ENCODE measurements at regions of chr7 and their contacts with region 1.

Region 1: GRCh38 chr7:134329614-134330340 is 13.0 kb upstream of the SLC35B4 start:
- DNase-seq: no peak
- H3K4me3 ChIP-seq: no peak overlapping the region
- H3K27ac ChIP-seq: no peak overlapping the region
- H3K4me1 ChIP-seq: no peaks in the 10 kb centered on the region
- H3K27me3 ChIP-seq: peaks cover 5% of the 10 kb centered on the region
- CTCF ChIP-seq: no peak
- EP300 ChIP-seq: no peak
- POLR2A ChIP-seq: no peak

Region 2: DNA sequence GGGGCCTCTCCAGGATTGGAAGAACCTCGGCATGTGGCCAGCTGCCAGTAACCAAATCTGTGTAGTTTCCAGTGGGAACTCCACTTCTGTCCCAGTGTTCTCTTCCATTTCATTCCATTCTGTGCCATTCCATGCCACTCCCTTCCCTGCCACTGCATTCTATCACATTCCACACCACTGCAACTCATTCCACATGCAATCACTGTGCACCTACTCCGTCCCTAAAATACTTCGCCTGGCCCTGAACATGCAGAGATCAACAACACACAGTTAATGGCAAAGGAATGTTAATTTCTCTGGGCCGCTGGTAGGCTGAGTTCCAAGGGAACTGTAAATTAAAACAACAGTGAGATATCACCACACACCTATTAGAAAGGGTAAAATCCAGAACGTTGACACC is 64.3 kb after region 1 on chr7:
- in situ Hi-C with region 1: no loop called
- intact Hi-C with region 1: loop called (anchors 10 kb)
- DNase-seq: no peak
- H3K4me3 ChIP-seq: no peak overlapping the region
- H3K27ac ChIP-seq: no peak overlapping the region
- H3K4me1 ChIP-seq: no peaks in the 10 kb centered on the region
- H3K27me3 ChIP-seq: no peaks in the 10 kb centered on the region
- CTCF ChIP-seq: no peak
- EP300 ChIP-seq: no peak
- POLR2A ChIP-seq: no peak

Measured in transverse colon (tissue), 4 donors.